SK-N-SH (cell line): ENCODE measurements at regions of chr2 and their contacts with region 1.

Region 1: DNA sequence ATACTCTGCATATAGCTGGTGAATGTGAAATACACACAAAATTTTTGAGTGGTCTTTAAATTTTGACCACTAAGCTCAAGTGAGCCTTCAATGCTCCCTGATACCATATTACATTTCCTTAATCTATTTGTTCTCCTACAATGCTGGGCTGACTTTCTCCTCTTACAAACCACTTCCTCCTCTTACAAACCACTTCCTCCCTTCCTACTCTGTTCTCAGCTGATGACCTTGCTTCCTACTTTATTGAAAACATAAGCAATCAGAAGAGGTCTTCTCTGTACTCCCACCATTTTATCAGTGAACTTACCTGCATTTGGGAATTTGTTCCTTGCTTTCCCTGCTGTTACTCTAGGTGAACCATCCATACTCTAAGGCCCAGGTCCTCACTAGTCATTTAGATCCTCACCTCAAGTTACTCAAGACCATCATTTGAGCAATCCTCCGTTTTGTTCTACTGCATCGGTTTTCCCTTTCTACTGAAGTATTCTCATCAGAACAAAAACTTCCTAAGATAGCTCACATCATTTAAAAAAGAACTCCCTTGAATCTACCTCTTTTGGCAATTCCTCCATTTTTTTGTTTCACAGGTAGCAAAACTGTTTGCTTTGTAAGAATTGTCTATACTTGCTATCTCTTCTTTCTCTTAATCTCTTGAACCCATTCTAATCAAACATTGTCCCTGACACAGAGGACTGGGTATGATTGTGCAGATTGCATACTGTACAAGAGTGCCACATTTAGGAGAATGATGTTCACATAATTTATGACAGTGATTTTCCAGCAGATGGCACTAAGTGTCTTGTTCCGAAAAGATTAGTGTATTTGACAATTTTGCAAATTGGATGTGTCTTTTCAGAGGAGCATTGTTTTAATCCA is 96.5 kb downstream of the EPB41L5 start:
- DNase-seq: peak; percentile 41
- H3K4me3 ChIP-seq: no peak overlapping the region
- H3K27ac ChIP-seq: peak overlapping the region in 1 of 2 experiments; percentile 45; a peak in 2 of 4 replicates
- H3K4me1 ChIP-seq: peaks cover 14 to 20% of the 10 kb centered on the region in 2 experiments
- H3K27me3 ChIP-seq: no peaks in the 10 kb centered on the region
- CTCF ChIP-seq: peak; percentile 63
- EP300 ChIP-seq: peak in 1 of 2 experiments; percentile 24; a peak in 1 of 4 replicates
- RAD21 ChIP-seq: peak; percentile 79

Region 2: GRCh38 chr2:120094795-120095194 is 14.6 kb before region 1 on chr2:
- CTCF ChIA-PET with region 1: interaction called, 10 read pairs
- POLR2A ChIA-PET with region 1: no interaction called
- DNase-seq: no peak
- H3K4me3 ChIP-seq: no peak overlapping the region
- H3K27ac ChIP-seq: no peak overlapping the region
- H3K4me1 ChIP-seq: no peaks in the 10 kb centered on the region; a peak in 2 of 4 replicates
- H3K27me3 ChIP-seq: no peaks in the 10 kb centered on the region
- CTCF ChIP-seq: no peak
- EP300 ChIP-seq: no peak
- RAD21 ChIP-seq: no peak

Region 3: GRCh38 chr2:120134263-120134662 is 24.8 kb after region 1 on chr2:
- CTCF ChIA-PET with region 1: interaction called, 33 read pairs
- POLR2A ChIA-PET with region 1: no interaction called
- DNase-seq: no peak
- H3K4me3 ChIP-seq: peak overlapping the region in 1 of 2 experiments; percentile 9; a peak in 1 of 4 replicates
- H3K27ac ChIP-seq: no peak overlapping the region; a peak in 1 of 4 replicates
- H3K4me1 ChIP-seq: peaks cover 3 to 24% of the 10 kb centered on the region in 2 experiments; a peak in 2 of 4 replicates
- H3K27me3 ChIP-seq: no peaks in the 10 kb centered on the region
- CTCF ChIP-seq: no peak
- EP300 ChIP-seq: no peak
- RAD21 ChIP-seq: no peak

Region 4: DNA sequence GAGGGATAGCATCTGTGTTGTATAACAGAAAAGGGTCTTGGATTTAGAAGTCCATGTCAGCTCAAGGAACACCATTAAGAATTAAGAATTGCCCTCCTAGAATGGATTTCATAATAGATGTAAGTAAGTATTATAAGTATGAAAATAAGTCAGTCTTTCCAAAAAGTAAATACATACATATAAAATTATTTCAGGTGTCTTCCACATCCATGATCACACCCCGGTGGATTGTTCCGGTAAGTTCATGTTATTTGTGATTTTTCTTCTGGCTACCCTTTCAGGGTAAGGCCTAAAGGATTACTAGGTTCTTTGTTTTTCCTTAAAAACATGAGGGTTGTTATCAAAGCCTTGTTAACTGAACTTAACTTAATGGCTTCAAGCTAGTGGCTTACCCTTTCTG is 57.8 kb after region 1 on chr2:
- CTCF ChIA-PET with region 1: interaction called, 49 read pairs
- POLR2A ChIA-PET with region 1: no interaction called
- DNase-seq: no peak
- H3K4me3 ChIP-seq: no peak overlapping the region
- H3K27ac ChIP-seq: no peak overlapping the region
- H3K4me1 ChIP-seq: no peaks in the 10 kb centered on the region; a peak in 1 of 4 replicates
- H3K27me3 ChIP-seq: no peaks in the 10 kb centered on the region
- CTCF ChIP-seq: no peak
- EP300 ChIP-seq: no peak
- RAD21 ChIP-seq: no peak

Region 5: DNA sequence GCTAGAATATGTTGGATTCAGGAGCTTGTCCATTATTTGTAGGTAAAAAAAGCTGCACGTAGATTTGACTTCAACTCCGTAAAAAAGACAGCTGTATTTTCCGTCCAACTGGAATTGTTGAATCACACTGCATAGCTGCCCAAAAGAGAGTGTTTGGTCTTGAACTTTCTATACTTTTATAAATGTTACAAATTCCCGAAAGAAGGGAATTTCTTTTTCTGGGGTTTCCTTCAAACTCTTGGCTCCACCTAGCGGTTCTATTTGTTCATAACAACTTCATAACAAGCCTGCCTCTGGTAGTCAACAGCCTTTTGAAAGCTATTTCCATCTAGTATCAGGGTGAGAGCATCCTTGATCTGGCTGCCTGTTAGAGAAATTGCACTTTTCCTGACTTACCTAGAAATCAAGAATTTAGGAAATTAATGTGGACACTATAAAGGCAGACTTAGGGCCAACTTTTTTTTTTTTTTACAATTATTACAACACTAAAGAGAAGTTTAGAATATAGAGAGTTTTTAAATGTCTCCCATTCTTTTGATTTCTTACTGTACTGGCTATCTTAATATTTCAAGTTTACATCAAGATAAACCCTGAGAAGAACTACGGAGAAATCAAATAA is 65.6 kb after region 1 on chr2:
- CTCF ChIA-PET with region 1: interaction called, 129 read pairs
- POLR2A ChIA-PET with region 1: no interaction called
- DNase-seq: peak; percentile 74
- H3K4me3 ChIP-seq: no peak overlapping the region
- H3K27ac ChIP-seq: peak overlapping the region in 1 of 2 experiments; percentile 28; a peak in 1 of 4 replicates
- H3K4me1 ChIP-seq: no peaks in the 10 kb centered on the region; a peak in 1 of 4 replicates
- H3K27me3 ChIP-seq: no peaks in the 10 kb centered on the region
- CTCF ChIP-seq: peak; percentile 81
- EP300 ChIP-seq: no peak
- RAD21 ChIP-seq: peak; percentile 88

Region 6: GRCh38 chr2:120219766-120220165 is 110.3 kb after region 1 on chr2:
- CTCF ChIA-PET with region 1: interaction called, 10 read pairs
- POLR2A ChIA-PET with region 1: no interaction called
- DNase-seq: peak; percentile 6
- H3K4me3 ChIP-seq: no peak overlapping the region
- H3K27ac ChIP-seq: no peak overlapping the region
- H3K4me1 ChIP-seq: peaks cover 23 to 24% of the 10 kb centered on the region in 2 experiments; a peak in 3 of 4 replicates
- H3K27me3 ChIP-seq: no peaks in the 10 kb centered on the region
- CTCF ChIP-seq: no peak
- EP300 ChIP-seq: no peak
- RAD21 ChIP-seq: no peak